A549 (cell line): ENCODE measurements at regions of chr20 and their contacts with region 1.

Region 1: DNA sequence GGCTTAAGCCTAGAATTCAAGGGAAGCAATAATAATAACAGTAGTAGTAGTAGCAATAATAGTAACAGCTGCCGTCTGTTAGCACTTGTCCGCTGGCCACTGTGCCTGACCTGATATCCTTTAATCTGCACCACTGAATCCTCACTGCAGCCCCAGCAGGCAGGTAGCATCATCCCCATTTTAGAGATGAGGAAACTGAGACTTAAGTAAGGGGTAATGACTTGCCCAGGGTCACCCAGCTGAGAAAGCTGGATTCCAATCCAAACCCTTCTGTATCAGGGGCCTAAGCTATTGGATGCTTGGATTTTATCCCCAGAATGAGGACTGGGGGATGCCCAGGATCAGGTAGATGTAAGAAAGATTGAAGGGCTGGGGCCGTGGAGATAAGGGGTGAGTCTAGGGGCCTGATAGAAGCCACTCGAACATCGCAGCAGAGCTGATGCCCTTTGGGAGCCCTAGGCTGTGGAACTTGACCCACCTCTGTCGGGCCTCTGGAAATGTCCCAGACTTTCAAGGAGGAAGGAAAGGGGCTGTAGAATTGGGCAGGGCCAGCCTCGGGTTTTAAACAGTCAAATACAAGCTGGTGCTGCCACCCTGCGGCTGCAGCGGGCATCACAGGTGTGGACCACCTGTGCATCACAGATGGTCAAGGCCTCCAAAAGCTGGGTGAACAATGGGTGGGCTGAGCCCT is 102.1 kb upstream of the MYL9 start:
- DNase-seq: peak; percentile 68 to 76
- ATAC-seq: peak; percentile 67 to 81
- H3K4me3 ChIP-seq: no peak overlapping the region
- H3K27ac ChIP-seq: no peak overlapping the region
- H3K4me1 ChIP-seq: no peaks in the 10 kb centered on the region
- CTCF ChIP-seq: peak; percentile 88
- EP300 ChIP-seq: no peak
- POLR2A ChIP-seq: no peak
- RAD21 ChIP-seq: peak; percentile 93 to 94

Region 2: DNA sequence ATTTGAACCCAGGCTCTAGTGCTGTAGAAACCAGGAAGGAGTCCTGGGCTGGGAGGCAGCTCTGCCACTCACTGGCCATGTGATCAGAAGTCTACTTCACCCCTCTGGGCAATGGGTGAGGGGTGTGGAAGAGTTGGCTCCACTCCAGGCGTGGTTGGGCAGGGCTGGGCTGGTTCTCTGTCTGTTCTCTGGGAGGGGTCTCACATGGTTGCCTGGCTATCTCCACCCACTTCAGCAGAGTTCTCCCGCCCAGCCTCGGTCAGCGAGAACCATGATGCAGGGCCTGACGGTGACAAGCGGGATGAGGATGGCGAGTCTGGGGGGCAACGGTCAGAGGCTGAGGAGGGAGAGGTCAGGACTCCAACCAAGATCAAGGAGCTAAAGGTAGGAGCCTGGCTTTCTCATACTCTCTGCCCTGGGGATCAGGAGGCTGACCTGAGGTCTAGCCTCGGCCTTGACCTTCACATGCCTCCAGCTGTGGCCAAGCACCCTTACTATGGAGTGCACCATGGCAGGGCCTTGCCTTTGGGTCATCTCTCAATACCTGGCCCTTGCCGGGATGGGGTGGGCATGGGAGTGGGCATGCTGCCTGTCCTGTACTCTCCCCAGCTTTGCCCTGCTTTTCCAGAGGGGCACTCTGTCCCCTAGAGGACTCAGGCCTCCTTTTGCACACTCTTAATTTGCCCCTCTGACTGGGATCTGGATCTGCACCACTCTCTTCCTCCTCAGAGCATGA is 245.0 kb before region 1 on chr20:
- CTCF ChIA-PET with region 1: interaction called, 27 read pairs
- POLR2A ChIA-PET with region 1: no interaction called
- DNase-seq: no peak
- ATAC-seq: no peak
- H3K4me3 ChIP-seq: no peak overlapping the region
- H3K27ac ChIP-seq: no peak overlapping the region
- H3K4me1 ChIP-seq: no peaks in the 10 kb centered on the region
- CTCF ChIP-seq: no peak
- EP300 ChIP-seq: no peak
- POLR2A ChIP-seq: no peak
- RAD21 ChIP-seq: no peak

Region 3: GRCh38 chr20:36230019-36230418 is 209.2 kb before region 1 on chr20:
- CTCF ChIA-PET with region 1: interaction called, 18 read pairs
- POLR2A ChIA-PET with region 1: no interaction called
- DNase-seq: no peak
- ATAC-seq: no peak
- H3K4me3 ChIP-seq: no peak overlapping the region
- H3K27ac ChIP-seq: no peak overlapping the region
- H3K4me1 ChIP-seq: no peaks in the 10 kb centered on the region
- CTCF ChIP-seq: no peak
- EP300 ChIP-seq: no peak
- POLR2A ChIP-seq: no peak
- RAD21 ChIP-seq: no peak

Region 4: GRCh38 chr20:36261389-36262105 is 177.6 kb before region 1 on chr20:
- CTCF ChIA-PET with region 1: interaction called, 20 read pairs
- POLR2A ChIA-PET with region 1: no interaction called
- DNase-seq: no peak
- ATAC-seq: peak; percentile 13 to 21; a peak in 2 of 6 replicates
- H3K4me3 ChIP-seq: no peak overlapping the region
- H3K27ac ChIP-seq: no peak overlapping the region
- H3K4me1 ChIP-seq: no peaks in the 10 kb centered on the region
- CTCF ChIP-seq: no peak
- EP300 ChIP-seq: no peak
- POLR2A ChIP-seq: no peak
- RAD21 ChIP-seq: no peak

Region 5: GRCh38 chr20:36390719-36391415 is 48.3 kb before region 1 on chr20:
- CTCF ChIA-PET with region 1: interaction called, 10 read pairs
- POLR2A ChIA-PET with region 1: no interaction called
- DNase-seq: no peak
- ATAC-seq: no peak
- H3K4me3 ChIP-seq: no peak overlapping the region
- H3K27ac ChIP-seq: no peak overlapping the region
- H3K4me1 ChIP-seq: no peaks in the 10 kb centered on the region
- CTCF ChIP-seq: no peak
- EP300 ChIP-seq: no peak
- POLR2A ChIP-seq: no peak
- RAD21 ChIP-seq: no peak

Region 6: GRCh38 chr20:36454698-36455427 is 15.7 kb after region 1 on chr20:
- CTCF ChIA-PET with region 1: interaction called, 48 read pairs
- POLR2A ChIA-PET with region 1: no interaction called
- DNase-seq: no peak
- ATAC-seq: peak; percentile 55 to 63
- H3K4me3 ChIP-seq: no peak overlapping the region
- H3K27ac ChIP-seq: peak overlapping the region in 1 of 2 experiments; percentile 67; a peak in 3 of 6 replicates
- H3K4me1 ChIP-seq: peaks cover 11% of the 10 kb centered on the region
- CTCF ChIP-seq: no peak
- EP300 ChIP-seq: no peak
- POLR2A ChIP-seq: no peak
- RAD21 ChIP-seq: no peak

Region 7: GRCh38 chr20:36620917-36621316 is 181.7 kb after region 1 on chr20:
- CTCF ChIA-PET with region 1: no interaction called
- POLR2A ChIA-PET with region 1: no interaction called
- DNase-seq: no peak
- ATAC-seq: no peak
- H3K4me3 ChIP-seq: no peak overlapping the region
- H3K27ac ChIP-seq: no peak overlapping the region
- H3K4me1 ChIP-seq: no peaks in the 10 kb centered on the region
- CTCF ChIP-seq: no peak
- EP300 ChIP-seq: no peak
- POLR2A ChIP-seq: no peak
- RAD21 ChIP-seq: no peak